Activated naive CD4-positive, alpha-beta T cell treated with anti-CD3 and anti-CD28 coated beads for 36 hours (primary cell): ENCODE measurements at regions of chr9 and their contacts with region 1.

Region 1: GRCh38 chr9:74952281-74953151 is at the start of gene C9orf40:
- DNase-seq: peak; percentile 92
- H3K4me3 Mint-ChIP-seq: peak within 1 kb of the TSS; percentile 95
- H3K27ac Mint-ChIP-seq: peak within 1 kb of the TSS; percentile 89
- H3K4me1 Mint-ChIP-seq: peaks cover 26% of the 10 kb centered on the region
- H3K27me3 Mint-ChIP-seq: no peaks in the 10 kb centered on the region
- total RNA-seq, gene C9orf40: 23.1 to 23.9 TPM

Region 2: GRCh38 chr9:74887041-74887980 is 65.2 kb before region 1 on chr9 and contains the start of gene TRPM6:
- CTCF ChIA-PET with region 1: no interaction called
- intact Hi-C with region 1: loop called (anchors 2 kb)
- DNase-seq: peak; percentile 56
- H3K4me3 Mint-ChIP-seq: peak within 1 kb of the TSS; percentile 77
- H3K27ac Mint-ChIP-seq: no peak within 1 kb of the TSS
- H3K4me1 Mint-ChIP-seq: peaks cover 8% of the 10 kb centered on the region
- H3K27me3 Mint-ChIP-seq: peaks cover 46% of the 10 kb centered on the region
- total RNA-seq, gene TRPM6: not detected

Region 3: DNA sequence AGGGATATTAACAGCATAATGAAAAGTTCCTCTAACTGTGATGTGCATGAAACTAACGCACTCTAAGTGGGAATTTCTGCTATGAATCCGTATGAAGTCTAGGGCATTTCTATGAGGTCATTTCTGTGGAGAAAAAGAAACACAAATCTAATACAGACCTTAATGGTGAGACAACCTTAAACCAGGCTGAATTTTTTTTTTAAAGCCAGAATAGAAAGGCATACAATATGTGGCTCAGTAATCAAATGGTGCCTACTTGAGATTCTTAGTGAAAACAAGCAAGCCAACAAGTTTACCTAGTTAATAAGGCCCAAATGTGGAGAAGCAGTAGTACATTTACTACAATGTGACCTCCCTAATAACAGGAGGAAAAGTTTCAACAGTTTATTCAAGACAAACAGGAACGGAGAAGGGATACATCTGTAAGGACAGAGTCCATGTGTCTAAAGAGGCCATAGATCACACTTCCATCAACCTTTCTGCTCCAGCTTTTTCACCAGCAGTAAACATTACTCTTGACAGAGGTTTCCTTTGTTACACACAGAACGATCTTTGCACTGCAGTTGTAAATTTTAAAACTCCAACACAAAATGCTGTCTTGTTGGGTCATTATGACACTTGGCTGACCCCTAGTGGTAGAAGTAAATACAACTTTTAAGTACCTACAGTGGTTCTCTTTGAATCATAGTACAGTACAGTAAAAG is 49.4 kb after region 1 on chr9:
- CTCF ChIA-PET with region 1: interaction called, 4 read pairs
- intact Hi-C with region 1: loop called (anchors 1 kb)
- DNase-seq: no peak
- H3K4me3 Mint-ChIP-seq: no peak overlapping the region
- H3K27ac Mint-ChIP-seq: no peak overlapping the region
- H3K4me1 Mint-ChIP-seq: no peaks in the 10 kb centered on the region
- H3K27me3 Mint-ChIP-seq: no peaks in the 10 kb centered on the region

Region 4: GRCh38 chr9:75071530-75072124 is 119.1 kb after region 1 on chr9:
- CTCF ChIA-PET with region 1: interaction called, 5 read pairs
- intact Hi-C with region 1: loop called (anchors 2 kb)
- DNase-seq: peak; percentile 90
- H3K4me3 Mint-ChIP-seq: peak overlapping the region; percentile 0
- H3K27ac Mint-ChIP-seq: peak overlapping the region; percentile 79
- H3K4me1 Mint-ChIP-seq: peaks cover 41% of the 10 kb centered on the region
- H3K27me3 Mint-ChIP-seq: no peaks in the 10 kb centered on the region

Region 5: DNA sequence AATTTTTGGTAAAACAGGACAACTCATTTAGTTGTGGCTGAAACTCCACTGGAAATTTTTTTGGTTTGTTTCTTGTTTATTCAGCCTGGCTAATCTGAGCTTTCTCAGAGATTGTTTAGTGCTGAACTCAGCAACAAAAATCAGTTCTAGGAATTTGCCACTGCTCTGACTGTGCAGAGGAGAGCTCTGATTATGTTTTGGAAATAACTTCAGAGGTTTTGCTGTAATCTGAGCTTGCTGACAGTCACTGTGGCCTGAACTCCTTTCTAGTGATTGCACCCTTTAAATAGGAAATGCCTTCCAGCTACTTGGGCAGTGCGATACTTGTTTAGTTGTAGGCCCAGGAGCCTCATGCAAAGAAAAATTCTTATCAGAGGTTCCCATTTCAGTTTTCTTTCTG is 196.0 kb after region 1 on chr9:
- CTCF ChIA-PET with region 1: no interaction called
- intact Hi-C with region 1: loop called (anchors 5 kb)
- DNase-seq: peak; percentile 32
- H3K4me3 Mint-ChIP-seq: no peak overlapping the region
- H3K27ac Mint-ChIP-seq: peak overlapping the region; percentile 83
- H3K4me1 Mint-ChIP-seq: peaks cover 64% of the 10 kb centered on the region
- H3K27me3 Mint-ChIP-seq: no peaks in the 10 kb centered on the region

Region 6: DNA sequence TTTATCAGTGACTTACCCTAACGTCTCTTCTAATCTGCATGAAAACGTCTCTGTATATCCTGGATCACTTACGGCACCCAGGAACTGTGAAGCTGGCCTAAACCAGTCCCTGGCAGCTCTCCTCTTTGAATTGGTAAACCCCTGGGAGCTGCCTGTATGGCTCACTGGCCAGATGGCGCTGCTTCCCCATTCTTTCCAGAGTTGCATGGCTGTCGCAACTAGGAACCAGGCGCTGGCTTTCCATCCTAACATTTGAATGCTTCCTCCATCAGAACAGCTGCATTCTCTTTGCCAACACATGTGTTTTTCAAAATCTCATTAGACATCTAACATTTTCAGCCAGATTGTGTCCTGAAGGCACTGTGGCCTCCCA is 1803.7 kb after region 1 on chr9:
- CTCF ChIA-PET with region 1: no interaction called
- intact Hi-C with region 1: no loop called
- DNase-seq: peak; percentile 5
- H3K4me3 Mint-ChIP-seq: no peak overlapping the region
- H3K27ac Mint-ChIP-seq: no peak overlapping the region
- H3K4me1 Mint-ChIP-seq: no peaks in the 10 kb centered on the region
- H3K27me3 Mint-ChIP-seq: no peaks in the 10 kb centered on the region